IMR-90 (cell line): ENCODE measurements at regions of chr2 and their contacts with region 1.

Region 1: DNA sequence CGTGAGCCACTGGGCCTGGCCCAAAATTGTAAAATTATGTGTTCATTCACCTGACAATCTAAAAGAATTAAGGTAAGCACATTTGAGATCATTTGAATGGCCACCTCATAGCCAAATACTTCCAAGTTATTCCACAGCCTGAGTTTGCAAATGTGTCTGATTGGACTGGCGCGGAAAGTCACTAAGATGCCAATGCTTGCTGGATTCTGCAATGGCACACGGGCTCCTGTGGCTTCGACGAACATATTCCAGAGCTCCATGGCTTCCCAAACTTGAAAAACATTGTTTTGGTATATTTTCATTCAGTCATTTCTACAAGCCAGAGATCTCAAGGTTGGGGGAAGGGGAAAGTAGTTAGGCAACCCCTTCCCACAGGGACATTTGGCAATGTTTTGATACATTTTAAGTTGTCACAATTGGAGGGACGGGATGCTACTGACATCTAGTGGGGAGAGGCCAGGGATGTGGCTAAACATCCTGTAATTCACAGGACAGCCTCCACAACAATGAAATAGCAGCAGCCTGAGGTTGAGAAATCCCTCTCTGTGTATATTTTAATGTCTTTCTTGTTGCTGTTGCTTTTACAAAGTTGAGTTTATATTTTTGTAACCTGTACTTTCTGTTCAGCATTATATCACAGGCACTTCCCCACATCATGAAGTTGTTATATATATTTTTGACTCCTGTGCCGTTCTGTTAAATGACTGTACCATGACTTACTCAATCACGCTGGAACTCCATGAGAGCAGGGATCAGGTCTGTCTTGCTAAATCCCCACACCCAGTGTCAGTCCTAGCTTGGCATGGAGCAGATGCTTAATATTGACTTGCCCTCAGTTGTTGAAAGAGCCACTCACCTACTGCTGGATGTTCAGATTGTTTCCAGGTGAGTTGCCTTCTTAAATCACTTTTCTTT is 56.9 kb downstream of the COL4A4 start:
- DNase-seq: peak; percentile 71
- ATAC-seq: peak; percentile 98
- H3K4me3 ChIP-seq: no peak overlapping the region
- H3K27ac ChIP-seq: no peak overlapping the region
- H3K4me1 ChIP-seq: no peaks in the 10 kb centered on the region
- H3K27me3 ChIP-seq: peaks cover 2% of the 10 kb centered on the region; the same call in 1 of the 2 replicates
- CTCF ChIP-seq: peak; percentile 93
- POLR2A ChIP-seq: no peak
- RAD21 ChIP-seq: peak; percentile 90

Region 2: DNA sequence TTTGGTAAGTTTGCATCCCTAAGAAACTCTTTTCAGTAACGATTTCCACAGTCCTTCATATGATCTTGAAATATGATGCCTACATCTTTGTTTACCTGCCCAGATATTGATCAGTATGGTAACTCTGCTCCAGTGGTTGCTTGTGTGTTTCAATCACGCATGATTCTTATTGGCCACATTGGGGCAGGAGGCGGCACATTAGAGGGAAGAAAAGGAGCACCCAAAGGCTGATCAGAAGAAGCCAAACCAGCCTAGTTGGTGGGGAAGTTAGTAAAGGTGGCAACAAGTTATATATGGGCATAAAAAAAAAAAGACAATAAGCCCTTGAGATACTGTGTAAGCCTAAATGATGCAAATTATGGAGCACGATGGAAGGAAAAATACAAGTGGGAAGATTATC is 112.3 kb before region 1 on chr2:
- CTCF ChIA-PET with region 1: no interaction called
- POLR2A ChIA-PET with region 1: no interaction called
- dilution Hi-C with region 1: no loop called
- in situ Hi-C with region 1: no loop called
- intact Hi-C with region 1: loop called (anchors 1 kb)
- DNase-seq: no peak
- ATAC-seq: no peak
- H3K4me3 ChIP-seq: no peak overlapping the region
- H3K27ac ChIP-seq: no peak overlapping the region
- H3K4me1 ChIP-seq: no peaks in the 10 kb centered on the region
- H3K27me3 ChIP-seq: no peaks in the 10 kb centered on the region
- CTCF ChIP-seq: no peak
- POLR2A ChIP-seq: no peak
- RAD21 ChIP-seq: no peak

Region 3: DNA sequence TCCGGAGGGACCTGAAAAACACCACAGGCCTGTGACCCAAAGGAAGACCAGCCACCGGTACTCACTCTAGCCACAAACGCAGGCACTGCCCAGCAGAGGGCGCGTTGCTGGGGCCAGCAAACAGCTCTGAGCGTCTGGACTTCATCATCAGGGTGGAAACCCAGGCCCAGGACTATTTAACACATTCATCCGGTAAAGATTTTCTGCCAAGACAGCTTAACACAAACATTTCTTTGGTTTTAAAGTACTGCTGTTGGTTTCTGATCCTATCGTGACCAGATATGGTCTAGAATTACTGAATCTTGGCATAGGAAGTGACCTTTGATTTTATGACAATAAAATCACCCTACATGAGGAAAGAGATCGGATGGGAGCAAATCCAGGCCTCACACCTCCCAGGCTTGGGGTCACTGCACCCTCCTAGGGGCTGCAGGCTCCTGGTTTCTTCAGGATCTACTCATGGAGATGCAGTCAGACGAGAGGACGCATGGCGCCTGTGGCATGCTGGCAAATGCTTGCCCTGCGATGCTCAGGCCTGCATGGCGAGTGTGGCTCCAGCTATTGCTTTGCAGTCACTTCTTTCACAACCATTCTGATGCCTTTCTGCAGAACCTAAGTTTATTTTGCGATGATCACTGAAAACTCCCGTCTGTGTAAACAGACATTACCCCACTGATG is 73.5 kb before region 1 on chr2:
- CTCF ChIA-PET with region 1: no interaction called
- POLR2A ChIA-PET with region 1: no interaction called
- dilution Hi-C with region 1: no loop called
- in situ Hi-C with region 1: no loop called
- intact Hi-C with region 1: loop called (anchors 5 kb)
- DNase-seq: peak; percentile 32
- ATAC-seq: peak; percentile 91
- H3K4me3 ChIP-seq: no peak overlapping the region
- H3K27ac ChIP-seq: no peak overlapping the region
- H3K4me1 ChIP-seq: no peaks in the 10 kb centered on the region
- H3K27me3 ChIP-seq: peaks cover 7% of the 10 kb centered on the region
- CTCF ChIP-seq: peak; percentile 49
- POLR2A ChIP-seq: no peak
- RAD21 ChIP-seq: 0 out of 2 replicates have a peak, but pooled peaks have one; percentile 16

Region 4: GRCh38 chr2:227684276-227684675 is 577.2 kb after region 1 on chr2:
- CTCF ChIA-PET with region 1: no interaction called
- POLR2A ChIA-PET with region 1: no interaction called
- dilution Hi-C with region 1: no loop called
- in situ Hi-C with region 1: no loop called
- intact Hi-C with region 1: no loop called
- DNase-seq: no peak
- ATAC-seq: no peak
- H3K4me3 ChIP-seq: no peak overlapping the region
- H3K27ac ChIP-seq: no peak overlapping the region
- H3K4me1 ChIP-seq: no peaks in the 10 kb centered on the region
- H3K27me3 ChIP-seq: no peaks in the 10 kb centered on the region
- CTCF ChIP-seq: no peak
- POLR2A ChIP-seq: no peak
- RAD21 ChIP-seq: no peak